ENCODE measurements at regions of chr11 and their contacts with region 1.

Region 1: DNA sequence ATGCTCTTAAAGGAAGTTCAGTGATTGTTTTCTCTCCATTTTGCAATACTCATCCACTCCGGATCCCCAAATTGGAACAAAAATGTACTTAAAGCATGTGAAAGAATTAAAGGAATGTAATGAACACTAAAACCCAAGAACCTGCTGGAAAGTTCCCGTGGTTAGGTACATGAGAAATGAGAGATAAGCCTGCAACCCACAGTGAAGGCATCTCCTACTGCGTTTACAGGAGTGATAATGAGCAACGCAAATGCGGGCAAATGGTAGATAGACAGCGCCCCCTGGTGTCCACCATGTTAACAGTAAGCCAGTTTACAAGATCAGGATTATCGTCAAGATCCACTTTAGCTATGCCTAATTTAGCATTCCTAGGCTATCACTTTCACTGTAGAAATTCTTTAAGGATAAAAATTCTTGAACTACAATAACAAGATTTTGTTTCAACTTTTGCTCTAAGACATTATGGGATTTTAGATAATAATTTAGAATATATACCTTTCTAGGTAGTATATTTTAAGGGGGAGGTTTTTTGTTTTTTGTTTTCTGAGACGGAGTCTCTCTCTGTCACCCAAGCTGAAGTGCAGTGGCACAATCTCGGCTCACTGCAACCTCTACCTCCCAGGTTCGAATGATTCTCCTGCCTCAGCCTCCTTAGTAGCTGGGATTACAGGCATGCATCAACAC is 29.9 kb downstream of the ALG9 start:
- H3K4me3 Mint-ChIP-seq: no peak overlapping the region
- H3K27ac Mint-ChIP-seq: no peak overlapping the region
- H3K4me1 Mint-ChIP-seq: peaks cover 34% of the 10 kb centered on the region
- H3K27me3 Mint-ChIP-seq: no peaks in the 10 kb centered on the region

Region 2: GRCh38 chr11:111565114-111565720 is 276.3 kb before region 1 on chr11:
- intact Hi-C with region 1: loop called (anchors 1 kb)
- H3K4me3 Mint-ChIP-seq: no peak overlapping the region
- H3K27ac Mint-ChIP-seq: no peak overlapping the region
- H3K4me1 Mint-ChIP-seq: peaks cover 7% of the 10 kb centered on the region
- H3K27me3 Mint-ChIP-seq: peaks cover 1% of the 10 kb centered on the region

Region 3: DNA sequence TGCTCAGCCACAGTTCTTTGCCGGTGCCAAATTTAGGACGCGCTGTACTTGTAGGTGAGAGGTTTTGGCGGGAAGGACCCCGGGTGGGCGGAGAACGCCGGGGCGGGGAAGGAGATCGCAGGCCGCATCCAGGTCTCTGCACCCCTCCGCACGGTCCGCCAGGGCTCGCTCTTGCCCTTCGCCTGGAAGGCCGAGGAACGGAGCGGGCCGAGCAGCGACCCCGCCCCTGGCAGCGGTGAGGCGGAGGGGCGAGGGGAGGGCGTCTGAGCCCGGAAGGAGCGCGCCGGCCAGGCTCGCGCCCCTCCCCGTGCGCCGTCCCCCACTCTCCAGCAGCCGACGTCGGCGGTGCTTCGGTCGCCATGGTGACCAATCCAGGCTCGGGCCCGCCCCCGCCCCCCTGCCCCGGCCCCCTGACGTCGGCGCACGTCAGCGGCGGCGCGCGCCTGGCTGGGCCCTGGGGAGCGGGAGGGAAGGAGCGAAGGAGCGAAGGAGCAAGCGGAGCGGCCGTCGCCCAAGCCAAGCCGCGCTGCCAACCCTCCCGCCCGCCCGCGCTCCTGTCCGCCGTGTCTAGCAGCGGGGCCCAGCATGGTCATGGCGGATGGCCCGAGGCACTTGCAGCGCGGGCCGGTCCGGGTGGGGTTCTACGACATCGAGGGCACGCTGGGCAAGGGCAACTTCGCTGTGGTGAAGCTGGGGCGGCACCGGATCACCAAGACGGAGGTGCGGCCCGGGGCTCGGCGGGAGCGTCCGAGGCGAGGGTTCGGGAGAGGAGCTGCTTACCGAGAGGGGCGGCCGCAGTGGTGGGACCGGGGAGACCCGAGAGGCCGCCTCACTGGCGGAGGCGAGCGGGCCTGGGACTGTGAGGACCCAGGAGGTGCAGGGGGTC is 239.3 kb before region 1 on chr11 and contains the start of gene SIK2:
- intact Hi-C with region 1: loop called (anchors 5 kb)
- H3K4me3 Mint-ChIP-seq: peak within 1 kb of the TSS; percentile 89
- H3K27ac Mint-ChIP-seq: peak within 1 kb of the TSS; percentile 89
- H3K4me1 Mint-ChIP-seq: peaks cover 36% of the 10 kb centered on the region
- H3K27me3 Mint-ChIP-seq: no peaks in the 10 kb centered on the region

Measured in dendritic cell treated with granulocyte-macrophage colony-stimulating factor and Interleukin-4, amounts not matched to agents 40 ng/mL and 50 ng/mL, for 4 days (primary cell).